IMR-90 (cell line): ENCODE measurements at regions of chr2 and their contacts with region 1.

Region 1: GRCh38 chr2:18749912-18750526 is 160.7 kb upstream of the NT5C1B start:
- DNase-seq: peak; percentile 66
- ATAC-seq: peak; percentile 72; the same call in 1 of the 2 replicates
- H3K4me3 ChIP-seq: no peak overlapping the region
- H3K27ac ChIP-seq: no peak overlapping the region
- H3K4me1 ChIP-seq: peaks cover 5% of the 10 kb centered on the region; the same call in 1 of the 2 replicates
- H3K27me3 ChIP-seq: no peaks in the 10 kb centered on the region
- CTCF ChIP-seq: peak; percentile 93
- POLR2A ChIP-seq: 0 out of 2 replicates have a peak, but pooled peaks have one; percentile 35
- RAD21 ChIP-seq: peak; percentile 97

Region 2: DNA sequence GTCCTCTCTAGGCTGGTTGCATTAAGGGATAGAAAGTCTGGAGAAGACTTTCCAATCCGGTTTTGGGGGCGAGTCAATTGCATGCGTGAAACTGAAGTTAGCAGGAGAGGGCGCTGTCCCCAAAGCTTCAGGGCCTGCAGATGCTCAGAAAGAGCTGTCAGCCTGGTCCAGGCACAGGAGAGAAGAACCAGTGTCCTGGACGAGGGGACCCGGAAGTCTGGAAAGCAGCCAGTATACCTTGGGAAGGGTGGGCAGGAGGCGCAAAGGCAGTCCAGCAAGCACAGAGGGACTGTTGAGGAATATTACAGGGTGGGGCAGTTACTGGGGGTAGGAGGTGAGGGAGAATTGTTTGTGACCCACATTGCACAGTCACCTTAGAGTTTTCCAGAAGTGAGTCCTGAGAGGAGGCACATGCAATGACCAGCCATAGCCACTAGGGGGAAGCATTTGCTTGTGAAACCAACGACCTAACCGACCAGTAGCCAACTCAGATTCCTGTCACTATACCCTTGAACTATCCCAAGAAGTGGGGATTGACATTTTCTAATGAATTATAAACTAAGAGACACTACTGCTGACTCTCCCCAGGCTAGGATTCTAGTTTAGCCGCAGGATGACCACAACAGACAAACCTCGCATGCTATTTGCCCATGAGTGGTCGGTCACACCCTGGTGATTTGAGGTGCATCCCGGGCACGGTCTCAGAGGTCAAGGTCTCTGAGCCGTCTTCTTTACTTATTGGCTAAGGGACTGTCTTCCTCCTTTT is 362.4 kb before region 1 on chr2:
- CTCF ChIA-PET with region 1: no interaction called
- POLR2A ChIA-PET with region 1: interaction called, 4 read pairs
- dilution Hi-C with region 1: no loop called
- in situ Hi-C with region 1: no loop called
- intact Hi-C with region 1: loop called (anchors 2 kb)
- DNase-seq: peak; percentile 79
- ATAC-seq: peak; percentile 99
- H3K4me3 ChIP-seq: no peak overlapping the region
- H3K27ac ChIP-seq: no peak overlapping the region
- H3K4me1 ChIP-seq: no peaks in the 10 kb centered on the region
- H3K27me3 ChIP-seq: no peaks in the 10 kb centered on the region
- CTCF ChIP-seq: peak; percentile 94
- POLR2A ChIP-seq: no peak
- RAD21 ChIP-seq: peak; percentile 96

Region 3: DNA sequence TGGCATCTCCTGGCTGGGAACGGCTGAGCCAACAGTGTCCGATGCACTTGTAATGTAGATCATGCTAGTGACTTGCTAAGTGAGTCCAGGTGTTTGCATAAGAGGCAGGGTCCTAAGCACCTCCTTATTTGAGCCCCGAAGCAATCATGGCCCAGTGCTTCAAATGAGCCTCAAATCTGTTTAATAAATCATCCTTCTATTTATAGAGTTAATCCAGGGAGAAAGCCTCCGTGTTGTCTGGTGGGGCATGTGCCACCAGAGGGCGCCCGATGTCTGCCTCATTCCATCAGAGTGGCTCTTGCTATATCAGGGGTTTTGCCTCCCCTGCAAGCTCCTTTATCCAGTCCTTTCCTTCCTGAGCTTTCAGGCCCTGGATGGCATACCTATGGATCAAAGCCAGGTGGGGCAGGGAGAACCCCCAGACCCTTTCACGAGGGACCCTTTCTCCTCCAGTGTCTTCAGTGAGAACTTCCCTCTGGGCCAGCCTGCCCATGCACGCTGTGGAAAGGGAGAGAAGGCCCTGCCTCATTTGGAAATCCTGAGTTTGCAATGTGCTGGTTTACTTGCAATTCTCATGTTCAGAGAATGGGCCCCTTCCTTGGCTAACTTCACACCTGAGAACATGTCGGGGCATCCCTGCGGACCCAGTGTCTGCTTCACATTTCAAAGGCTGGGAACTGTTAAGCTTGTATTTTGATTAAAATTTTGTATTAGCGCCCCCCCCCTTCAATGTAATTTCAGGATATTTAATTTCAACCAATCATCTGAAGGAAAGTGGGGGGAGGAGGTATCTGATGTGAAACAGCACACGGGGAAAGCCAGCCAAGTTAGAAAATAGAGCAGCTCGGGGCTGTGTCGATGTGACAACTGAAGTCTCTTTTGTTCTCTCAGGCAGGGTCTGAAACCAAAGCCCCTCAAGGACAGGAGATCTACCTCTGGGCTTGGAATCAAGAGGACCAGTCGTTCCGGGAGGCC is 229.3 kb before region 1 on chr2:
- CTCF ChIA-PET with region 1: interaction called, 4 read pairs
- POLR2A ChIA-PET with region 1: no interaction called
- dilution Hi-C with region 1: no loop called
- in situ Hi-C with region 1: no loop called
- intact Hi-C with region 1: loop called (anchors 1 kb)
- DNase-seq: peak; percentile 78
- ATAC-seq: peak; percentile 58
- H3K4me3 ChIP-seq: no peak overlapping the region
- H3K27ac ChIP-seq: no peak overlapping the region
- H3K4me1 ChIP-seq: peaks cover 21% of the 10 kb centered on the region
- H3K27me3 ChIP-seq: no peaks in the 10 kb centered on the region
- CTCF ChIP-seq: peak; percentile 95
- POLR2A ChIP-seq: peak; percentile 39; the same call in 1 of the 2 replicates
- RAD21 ChIP-seq: peak; percentile 97

Region 4: DNA sequence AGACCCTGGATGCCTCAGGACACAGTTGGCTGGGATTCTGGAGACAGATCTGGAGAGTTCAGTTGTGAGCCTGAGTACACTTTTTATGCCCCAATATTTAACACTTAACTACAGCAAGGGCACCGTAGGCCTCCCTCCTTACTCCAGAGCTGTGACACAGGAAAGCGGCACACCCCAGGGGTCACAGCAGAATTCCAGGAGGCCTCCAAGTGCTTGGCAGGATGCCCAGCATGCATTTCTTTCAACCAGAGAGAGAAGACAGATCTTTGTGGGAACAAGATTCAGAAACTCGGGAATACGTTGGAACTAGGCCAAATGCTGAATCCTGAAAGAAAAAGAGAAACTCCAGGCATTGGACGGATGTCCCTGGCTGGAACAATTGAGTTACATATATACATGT is 38.6 kb after region 1 on chr2:
- CTCF ChIA-PET with region 1: no interaction called
- POLR2A ChIA-PET with region 1: no interaction called
- dilution Hi-C with region 1: no loop called
- in situ Hi-C with region 1: no loop called
- intact Hi-C with region 1: no loop called
- DNase-seq: peak; percentile 14
- ATAC-seq: no peak
- H3K4me3 ChIP-seq: no peak overlapping the region
- H3K27ac ChIP-seq: no peak overlapping the region
- H3K4me1 ChIP-seq: peaks cover 11% of the 10 kb centered on the region
- H3K27me3 ChIP-seq: no peaks in the 10 kb centered on the region
- CTCF ChIP-seq: no peak
- POLR2A ChIP-seq: no peak
- RAD21 ChIP-seq: no peak

Region 5: GRCh38 chr2:18925296-18925695 is 175.3 kb after region 1 on chr2:
- CTCF ChIA-PET with region 1: no interaction called
- POLR2A ChIA-PET with region 1: no interaction called
- dilution Hi-C with region 1: no loop called
- in situ Hi-C with region 1: no loop called
- intact Hi-C with region 1: loop called (anchors 10 kb)
- DNase-seq: peak; percentile 94
- ATAC-seq: peak; percentile 94
- H3K4me3 ChIP-seq: no peak overlapping the region
- H3K27ac ChIP-seq: peak overlapping the region; percentile 47; the same call in 1 of the 2 replicates
- H3K4me1 ChIP-seq: peaks cover 16% of the 10 kb centered on the region
- H3K27me3 ChIP-seq: no peaks in the 10 kb centered on the region
- CTCF ChIP-seq: no peak
- POLR2A ChIP-seq: no peak
- RAD21 ChIP-seq: 0 out of 2 replicates have a peak, but pooled peaks have one; percentile 11

Region 6: DNA sequence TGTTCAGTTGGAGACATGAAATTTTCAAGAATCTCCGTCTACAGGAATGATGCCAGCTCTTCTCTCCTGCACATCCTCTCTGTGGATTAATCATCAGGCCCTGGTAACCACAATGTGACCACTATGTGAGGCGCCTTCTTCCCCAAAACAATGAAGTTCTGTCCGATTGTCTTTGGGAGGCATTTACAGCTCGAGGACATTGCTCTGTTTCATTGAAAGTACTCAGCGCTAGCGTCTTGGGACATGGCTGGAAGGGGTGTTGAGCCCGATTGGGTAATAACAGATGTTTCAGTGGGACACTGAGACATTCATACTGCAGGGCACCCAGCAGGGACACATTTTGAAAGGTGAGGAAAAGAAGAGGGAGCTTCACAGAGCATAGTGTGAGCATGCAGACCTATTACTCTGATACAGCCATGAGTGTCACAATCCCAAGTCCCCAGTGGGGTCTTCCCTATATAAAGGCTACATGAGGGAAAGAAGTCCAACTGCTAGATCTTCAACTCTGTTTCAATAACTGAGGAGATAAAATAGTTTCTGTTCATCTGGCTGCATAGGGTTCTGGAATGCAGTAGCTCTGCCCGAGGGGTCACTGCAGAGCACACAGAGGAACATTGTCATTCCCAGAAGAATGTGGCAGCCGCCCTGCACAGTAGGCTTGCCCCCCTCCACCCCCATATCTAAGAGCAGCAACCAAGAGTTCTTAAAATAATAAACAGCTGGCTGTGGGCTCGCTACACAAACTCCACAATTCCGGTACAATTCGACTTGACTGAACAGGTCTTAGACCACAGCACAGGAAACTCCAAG is 371.1 kb after region 1 on chr2:
- CTCF ChIA-PET with region 1: no interaction called
- POLR2A ChIA-PET with region 1: no interaction called
- dilution Hi-C with region 1: no loop called
- in situ Hi-C with region 1: no loop called
- intact Hi-C with region 1: loop called (anchors 5 kb)
- DNase-seq: peak; percentile 87
- ATAC-seq: peak; percentile 88
- H3K4me3 ChIP-seq: no peak overlapping the region
- H3K27ac ChIP-seq: peak overlapping the region; percentile 54
- H3K4me1 ChIP-seq: peaks cover 22% of the 10 kb centered on the region
- H3K27me3 ChIP-seq: no peaks in the 10 kb centered on the region
- CTCF ChIP-seq: no peak
- POLR2A ChIP-seq: no peak
- RAD21 ChIP-seq: peak; percentile 36; the same call in 1 of the 2 replicates

Region 7: DNA sequence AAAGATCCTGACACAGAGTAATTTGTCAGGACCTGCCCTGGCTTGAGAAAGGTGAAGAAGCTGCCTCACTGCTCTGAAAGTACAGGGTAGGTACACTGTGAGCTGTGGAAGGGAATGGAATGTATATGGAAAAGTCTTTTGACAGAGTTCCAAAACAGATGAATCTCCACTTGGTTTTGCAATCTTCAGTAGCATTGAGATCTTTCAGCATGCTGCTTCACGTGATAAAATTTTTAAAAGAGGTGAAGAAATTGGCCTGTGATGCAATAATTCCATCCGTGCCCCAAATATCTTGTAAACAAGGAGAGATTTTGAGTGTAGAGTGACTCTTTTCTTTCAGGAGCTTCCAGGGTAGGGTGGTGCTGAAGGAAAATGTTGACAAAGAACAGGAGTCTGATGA is 485.3 kb after region 1 on chr2:
- CTCF ChIA-PET with region 1: no interaction called
- POLR2A ChIA-PET with region 1: no interaction called
- dilution Hi-C with region 1: no loop called
- in situ Hi-C with region 1: no loop called
- intact Hi-C with region 1: loop called (anchors 5 kb)
- DNase-seq: peak; percentile 81
- ATAC-seq: peak; percentile 49
- H3K4me3 ChIP-seq: no peak overlapping the region
- H3K27ac ChIP-seq: peak overlapping the region; percentile 6; the same call in 1 of the 2 replicates
- H3K4me1 ChIP-seq: peaks cover 17% of the 10 kb centered on the region
- H3K27me3 ChIP-seq: no peaks in the 10 kb centered on the region
- CTCF ChIP-seq: no peak
- POLR2A ChIP-seq: no peak
- RAD21 ChIP-seq: no peak

Region 8: GRCh38 chr2:19667085-19667484 is 917.1 kb after region 1 on chr2:
- CTCF ChIA-PET with region 1: no interaction called
- POLR2A ChIA-PET with region 1: no interaction called
- dilution Hi-C with region 1: no loop called
- in situ Hi-C with region 1: no loop called
- intact Hi-C with region 1: loop called (anchors 2 kb)
- DNase-seq: peak; percentile 59
- ATAC-seq: peak; percentile 51
- H3K4me3 ChIP-seq: no peak overlapping the region
- H3K27ac ChIP-seq: no peak overlapping the region
- H3K4me1 ChIP-seq: no peaks in the 10 kb centered on the region; the same call in 1 of the 2 replicates
- H3K27me3 ChIP-seq: peaks cover 4% of the 10 kb centered on the region
- CTCF ChIP-seq: peak; percentile 47
- POLR2A ChIP-seq: no peak
- RAD21 ChIP-seq: peak; percentile 58